Activated CD4-positive, alpha-beta T cell treated with anti-CD3 and anti-CD28 coated beads, Interleukin-2, amount 10 ng/mL, durations not matched to agents 24 days and 14 days (primary cell): ENCODE measurements at regions of chr2 and their contacts with region 1.

Region 1: GRCh38 chr2:162343824-162344616 is at the start of gene GCA:
- DNase-seq: peak; percentile 100
- H3K4me3 Mint-ChIP-seq: peak within 1 kb of the TSS; percentile 91
- H3K27ac Mint-ChIP-seq: peak within 1 kb of the TSS; percentile 69
- H3K4me1 Mint-ChIP-seq: peaks cover 17% of the 10 kb centered on the region
- H3K27me3 Mint-ChIP-seq: peaks cover 5% of the 10 kb centered on the region
- total RNA-seq, gene GCA: 13.6 and 16.2 TPM in 2 replicates

Region 2: GRCh38 chr2:162318328-162319180 is 25.5 kb before region 1 on chr2 and contains the start of gene IFIH1:
- intact Hi-C with region 1: loop called (anchors 1 kb)
- DNase-seq: peak; percentile 95
- H3K4me3 Mint-ChIP-seq: peak within 1 kb of the TSS; percentile 87
- H3K27ac Mint-ChIP-seq: peak within 1 kb of the TSS; percentile 93
- H3K4me1 Mint-ChIP-seq: peaks cover 54% of the 10 kb centered on the region
- H3K27me3 Mint-ChIP-seq: no peaks in the 10 kb centered on the region
- total RNA-seq, gene IFIH1: 22.5 and 26.3 TPM in 2 replicates